Ascending aorta (tissue), 2 donors: ENCODE measurements at regions of chr1 and their contacts with region 1.

Region 1: DNA sequence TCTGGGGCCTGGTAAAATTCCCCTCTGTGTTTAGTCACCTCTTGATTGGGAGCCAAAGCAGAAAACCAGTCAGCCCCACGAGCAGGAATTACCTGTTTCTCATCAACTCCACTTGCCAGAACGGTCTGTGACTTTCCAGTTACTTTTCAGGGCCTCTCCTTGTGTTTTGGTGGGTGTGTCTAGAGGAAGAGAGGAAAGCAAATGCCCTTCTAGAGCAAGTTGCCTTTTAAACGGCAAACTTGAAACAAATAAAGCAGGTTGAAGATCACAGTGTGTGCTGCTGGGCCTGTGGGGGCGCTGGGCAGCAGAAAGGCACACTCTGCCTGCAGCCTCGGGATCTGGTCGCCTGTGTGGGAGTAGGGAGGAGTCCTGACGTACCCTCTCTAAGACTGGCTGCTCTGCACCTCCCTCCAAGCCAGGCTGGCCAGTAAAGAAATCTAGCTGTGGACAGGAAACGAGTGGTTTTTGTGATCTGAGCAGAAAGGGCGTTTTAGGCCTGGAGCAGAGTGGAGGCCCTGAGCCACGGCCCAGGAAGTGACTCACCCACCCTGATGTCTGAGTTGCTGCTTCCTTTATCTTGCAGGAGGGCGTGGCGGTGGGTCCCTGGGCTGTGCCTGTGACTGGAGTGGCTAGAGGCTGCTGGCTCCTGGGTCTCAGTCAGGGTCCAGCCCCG is 11.1 kb upstream of the S100A11 start:
- DNase-seq: peak; percentile 93 to 97
- H3K4me3 ChIP-seq: peak overlapping the region; percentile 32
- H3K27ac ChIP-seq: peak overlapping the region; percentile 93 to 96
- H3K4me1 ChIP-seq: peaks cover 3 to 18% of the 10 kb centered on the region in 2 donors
- H3K27me3 ChIP-seq: no peaks in the 10 kb centered on the region
- CTCF ChIP-seq: peak; percentile 38 to 62 (median 55)

Region 2: GRCh38 chr1:151611832-151612500 is 435.9 kb before region 1 on chr1 and contains the start of gene SNX27:
- intact Hi-C with region 1: loop called (anchors 10 kb)
- DNase-seq: peak; percentile 76 to 96
- H3K4me3 ChIP-seq: peak within 1 kb of the TSS; percentile 66 to 95
- H3K27ac ChIP-seq: peak within 1 kb of the TSS; percentile 81 to 94
- H3K4me1 ChIP-seq: peaks cover 0 to 6% of the 10 kb centered on the region in 2 donors
- H3K27me3 ChIP-seq: no peaks in the 10 kb centered on the region
- CTCF ChIP-seq: no peak
- total RNA-seq, gene SNX27: 13.0 TPM

Region 3: GRCh38 chr1:151705753-151706463 is 342.0 kb before region 1 on chr1:
- intact Hi-C with region 1: no loop called
- DNase-seq: no peak
- H3K4me3 ChIP-seq: no peak overlapping the region
- H3K27ac ChIP-seq: no peak overlapping the region
- H3K4me1 ChIP-seq: no peaks in the 10 kb centered on the region
- H3K27me3 ChIP-seq: no peaks in the 10 kb centered on the region
- CTCF ChIP-seq: no peak

Region 4: GRCh38 chr1:151993654-151994496 is 54.0 kb before region 1 on chr1 and contains the start of gene S100A10:
- intact Hi-C with region 1: loop called (anchors 2 kb)
- DNase-seq: peak in 1 of 2 donors; percentile 85
- H3K4me3 ChIP-seq: peak within 1 kb of the TSS; percentile 73 to 97
- H3K27ac ChIP-seq: peak within 1 kb of the TSS; percentile 93 to 95
- H3K4me1 ChIP-seq: peaks cover 22 to 45% of the 10 kb centered on the region in 2 donors
- H3K27me3 ChIP-seq: no peaks in the 10 kb centered on the region
- CTCF ChIP-seq: peak in 1 of 3 experiments; percentile 6
- total RNA-seq, gene S100A10: 25.8 TPM

Region 5: GRCh38 chr1:152036267-152037216 is 11.3 kb before region 1 on chr1 and contains the start of gene S100A11:
- intact Hi-C with region 1: loop called (anchors 1 kb)
- DNase-seq: peak; percentile 77 to 95
- H3K4me3 ChIP-seq: peak within 1 kb of the TSS; percentile 79 to 83
- H3K27ac ChIP-seq: peak within 1 kb of the TSS; percentile 89 to 98
- H3K4me1 ChIP-seq: peaks cover 6 to 19% of the 10 kb centered on the region in 2 donors
- H3K27me3 ChIP-seq: no peaks in the 10 kb centered on the region
- CTCF ChIP-seq: no peak
- total RNA-seq, gene S100A11: 442 TPM

Region 6: GRCh38 chr1:152189657-152190442 is 142.0 kb after region 1 on chr1:
- intact Hi-C with region 1: loop called (anchors 1 kb)
- DNase-seq: peak in 1 of 2 donors; percentile 72
- H3K4me3 ChIP-seq: peak overlapping the region; percentile 57 to 74
- H3K27ac ChIP-seq: peak overlapping the region in 1 of 2 donors; percentile 72
- H3K4me1 ChIP-seq: no peaks in the 10 kb centered on the region
- H3K27me3 ChIP-seq: no peaks in the 10 kb centered on the region
- CTCF ChIP-seq: peak; percentile 54 to 66 (median 55)

Region 7: DNA sequence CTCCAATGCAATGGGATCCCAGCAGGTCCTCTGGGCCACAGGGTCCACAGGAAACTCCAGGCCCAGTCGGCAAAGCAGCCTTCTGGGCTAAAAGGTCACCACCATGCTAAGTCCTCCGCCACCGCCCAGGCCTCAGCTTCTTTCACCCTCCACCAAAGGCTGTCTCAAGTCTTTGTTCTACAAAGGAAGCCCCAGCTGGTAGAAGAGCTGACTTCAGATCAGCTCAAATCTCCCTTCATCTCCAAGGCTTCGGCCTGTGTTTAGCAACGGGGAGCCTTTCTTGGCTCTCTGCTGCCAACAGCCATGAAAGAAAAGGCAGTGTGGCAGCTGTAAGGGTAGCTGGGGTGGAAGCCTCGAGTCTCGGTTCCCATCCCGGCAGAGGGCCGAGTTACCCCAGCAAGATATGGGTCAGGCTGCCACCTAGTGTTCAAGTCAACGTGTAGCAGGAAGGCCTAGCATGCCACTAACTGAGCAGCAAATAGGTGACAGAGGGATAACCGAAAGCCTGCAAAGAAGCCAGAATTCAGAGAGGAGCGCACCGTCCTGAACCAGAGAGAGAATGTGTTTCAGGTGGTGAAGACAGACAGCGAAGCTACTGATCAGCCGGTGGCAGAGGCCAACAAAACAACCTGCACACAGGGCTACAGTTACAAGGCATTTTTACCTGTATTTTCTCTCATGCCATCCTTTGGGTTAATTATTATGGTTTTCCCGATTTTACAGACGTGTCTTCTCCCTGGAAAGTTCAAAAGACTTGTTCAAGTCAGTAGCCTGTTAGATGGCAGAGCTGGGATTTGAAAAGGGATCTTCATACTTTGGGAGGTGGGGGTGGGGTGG is 393.0 kb after region 1 on chr1:
- intact Hi-C with region 1: loop called (anchors 5 kb)
- DNase-seq: peak in 1 of 2 donors; percentile 74
- H3K4me3 ChIP-seq: no peak overlapping the region
- H3K27ac ChIP-seq: no peak overlapping the region
- H3K4me1 ChIP-seq: peaks cover 0 to 8% of the 10 kb centered on the region in 2 donors
- H3K27me3 ChIP-seq: no peaks in the 10 kb centered on the region
- CTCF ChIP-seq: peak; percentile 66 to 68 (median 66)

Region 8: GRCh38 chr1:152459596-152460528 is 412.0 kb after region 1 on chr1:
- intact Hi-C with region 1: loop called (anchors 1 kb)
- DNase-seq: peak in 1 of 2 donors; percentile 76
- H3K4me3 ChIP-seq: peak overlapping the region in 1 of 2 donors; percentile 16
- H3K27ac ChIP-seq: peak overlapping the region; percentile 4 to 6
- H3K4me1 ChIP-seq: no peaks in the 10 kb centered on the region
- H3K27me3 ChIP-seq: no peaks in the 10 kb centered on the region
- CTCF ChIP-seq: peak; percentile 30 to 78 (median 74)